ENCODE measurements at regions of chr16 and their contacts with region 1.

Region 1: GRCh38 chr16:53111078-53111791 is 56.4 kb downstream of the CHD9 start:
- DNase-seq: peak; percentile 55
- CTCF ChIP-seq: no peak

Region 2: GRCh38 chr16:51982715-51983680 is 1128.2 kb before region 1 on chr16:
- CTCF ChIA-PET with region 1: no interaction called
- POLR2A ChIA-PET with region 1: no interaction called
- DNase-seq: peak; percentile 26
- CTCF ChIP-seq: peak; percentile 68

Region 3: GRCh38 chr16:53099318-53100130 is 11.7 kb before region 1 on chr16:
- CTCF ChIA-PET with region 1: interaction called, 29 read pairs
- POLR2A ChIA-PET with region 1: interaction called, 5 read pairs
- DNase-seq: peak; percentile 65
- CTCF ChIP-seq: no peak

Region 4: DNA sequence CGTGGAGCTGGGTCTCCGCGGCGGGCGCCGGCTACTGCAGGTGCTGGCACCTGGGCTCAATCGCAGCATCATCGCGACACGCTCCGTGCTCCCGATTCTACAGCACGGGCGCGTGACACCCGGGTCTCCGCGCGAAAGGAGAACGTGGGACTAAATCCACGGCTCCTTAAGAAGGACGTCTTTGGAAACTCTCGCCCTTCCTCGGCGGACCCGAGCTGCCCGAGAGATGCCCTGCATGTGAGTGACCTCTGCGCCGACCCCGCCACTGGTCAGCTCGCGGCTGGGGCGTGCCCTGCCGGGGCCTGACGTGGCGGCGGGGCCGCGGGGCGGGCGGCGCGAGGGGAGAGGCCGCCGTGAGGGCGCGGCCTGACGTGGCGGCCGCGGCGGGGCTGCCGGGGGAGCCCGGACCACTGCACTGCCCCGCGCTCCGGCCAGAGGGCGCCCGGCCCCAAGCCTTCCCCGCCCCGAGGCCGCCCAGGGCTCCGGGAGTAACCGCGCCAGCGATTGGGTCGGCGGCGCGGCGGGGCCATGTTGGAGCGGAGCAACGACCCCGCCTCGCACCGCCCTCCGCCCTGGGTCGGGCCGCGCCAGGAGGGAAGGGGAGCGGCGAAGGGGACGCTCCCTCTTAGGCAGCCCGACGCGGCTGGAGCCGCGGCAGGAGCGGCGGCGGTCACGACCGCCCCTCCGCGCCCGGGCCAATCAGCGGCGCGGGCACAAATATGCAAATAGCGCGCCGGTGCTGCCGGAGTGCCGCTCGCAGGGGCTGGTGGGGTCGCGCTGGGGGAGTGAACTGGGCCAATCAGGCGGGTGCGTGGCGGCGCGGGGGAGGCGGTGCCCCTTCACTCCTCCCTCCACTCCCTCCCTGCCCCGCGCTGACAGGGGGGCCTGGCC is 19.2 kb after region 1 on chr16:
- CTCF ChIA-PET with region 1: interaction called, 12 read pairs
- POLR2A ChIA-PET with region 1: no interaction called
- DNase-seq: peak; percentile 96
- CTCF ChIP-seq: peak; percentile 74

Measured in GM10248 (cell line).